Activated B cell treated with CpG ODN at 0.5 μM for 24 hours (primary cell): ENCODE measurements at regions of chr10 and their contacts with region 1.

Region 1: GRCh38 chr10:117375360-117376178 is at the start of gene PDZD8:
- DNase-seq: peak; percentile 96
- ATAC-seq: peak; percentile 89
- H3K4me3 Mint-ChIP-seq: peak within 1 kb of the TSS; percentile 93
- H3K27ac Mint-ChIP-seq: peak within 1 kb of the TSS; percentile 75
- H3K4me1 Mint-ChIP-seq: peaks cover 35% of the 10 kb centered on the region
- H3K27me3 Mint-ChIP-seq: peaks cover 17% of the 10 kb centered on the region
- CTCF ChIP-seq: no peak
- total RNA-seq, gene PDZD8: 13.2 and 13.7 TPM in 2 replicates

Region 2: GRCh38 chr10:117353684-117354083 is 21.9 kb before region 1 on chr10:
- CTCF ChIA-PET with region 1: no interaction called
- POLR2A ChIA-PET with region 1: no interaction called
- intact Hi-C with region 1: loop called (anchors 2 kb)
- DNase-seq: no peak
- ATAC-seq: no peak
- H3K4me3 Mint-ChIP-seq: no peak overlapping the region
- H3K27ac Mint-ChIP-seq: no peak overlapping the region
- H3K4me1 Mint-ChIP-seq: peaks cover 41% of the 10 kb centered on the region
- H3K27me3 Mint-ChIP-seq: no peaks in the 10 kb centered on the region
- CTCF ChIP-seq: no peak

Region 3: DNA sequence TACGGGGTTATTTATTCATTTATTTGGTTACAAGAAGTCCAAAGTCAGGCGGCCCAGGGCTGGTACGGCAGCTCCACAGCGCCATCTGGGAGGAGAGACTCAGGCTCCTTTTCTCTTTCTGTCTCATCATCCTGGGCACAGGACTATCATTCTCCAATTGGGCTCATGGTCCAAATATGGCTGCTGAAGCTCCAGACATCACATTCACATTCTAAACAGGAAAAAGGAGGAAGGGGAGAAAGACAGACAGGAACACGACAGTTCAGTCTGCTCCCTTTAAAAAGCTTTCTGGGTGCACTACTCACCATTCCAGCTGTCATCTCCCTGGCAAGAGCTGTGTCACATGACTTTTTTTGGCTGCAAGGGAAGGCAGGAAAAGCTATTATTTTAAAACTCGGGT is 74.1 kb after region 1 on chr10:
- CTCF ChIA-PET with region 1: no interaction called
- POLR2A ChIA-PET with region 1: no interaction called
- intact Hi-C with region 1: no loop called
- DNase-seq: no peak
- ATAC-seq: no peak
- H3K4me3 Mint-ChIP-seq: no peak overlapping the region
- H3K27ac Mint-ChIP-seq: no peak overlapping the region
- H3K4me1 Mint-ChIP-seq: no peaks in the 10 kb centered on the region
- H3K27me3 Mint-ChIP-seq: peaks cover 6% of the 10 kb centered on the region
- CTCF ChIP-seq: no peak

Region 4: DNA sequence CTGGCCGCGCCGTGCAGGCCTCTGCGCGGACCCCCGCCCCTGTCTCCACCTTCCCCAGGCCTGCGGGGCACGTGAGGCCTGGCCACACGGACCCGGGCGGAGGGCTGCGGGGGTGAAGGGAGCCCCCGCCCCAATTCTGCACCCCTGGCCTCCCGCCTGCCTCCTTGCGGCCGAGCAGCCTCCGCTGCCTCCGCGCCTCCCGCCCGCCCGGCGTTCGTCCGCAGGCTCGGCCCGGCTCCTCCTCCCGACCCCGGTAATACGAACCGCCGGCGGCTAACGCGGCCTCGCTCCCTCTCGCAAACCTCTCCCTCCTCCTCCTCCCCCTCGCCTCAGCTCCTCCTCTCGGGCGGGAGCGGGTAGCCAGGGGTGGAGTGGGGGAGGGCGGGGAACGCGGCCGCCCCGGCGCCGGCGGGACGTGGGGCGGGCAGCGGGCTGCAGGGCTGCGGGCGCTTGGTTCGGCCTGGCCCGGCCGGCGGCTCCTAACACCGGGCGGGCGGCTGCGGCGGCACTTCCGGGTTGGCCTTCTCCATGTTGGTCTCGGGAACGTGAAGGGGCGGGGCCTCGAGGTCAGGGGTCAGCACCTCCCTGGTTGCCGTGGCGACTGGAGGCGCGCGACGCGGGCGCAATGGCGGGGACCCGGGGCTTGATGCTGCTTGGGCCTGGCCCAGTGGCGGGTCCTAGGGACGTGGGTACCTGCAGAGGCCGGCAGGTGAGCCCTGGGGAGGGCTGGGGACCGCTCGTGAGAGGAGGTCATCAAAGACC is 671.0 kb after region 1 on chr10 and contains the start of gene RAB11FIP2:
- CTCF ChIA-PET with region 1: no interaction called
- POLR2A ChIA-PET with region 1: no interaction called
- intact Hi-C with region 1: loop called (anchors 2 kb)
- DNase-seq: peak; percentile 98
- ATAC-seq: peak; percentile 92
- H3K4me3 Mint-ChIP-seq: peak within 1 kb of the TSS; percentile 89
- H3K27ac Mint-ChIP-seq: peak within 1 kb of the TSS; percentile 66
- H3K4me1 Mint-ChIP-seq: peaks cover 38% of the 10 kb centered on the region
- H3K27me3 Mint-ChIP-seq: no peaks in the 10 kb centered on the region
- CTCF ChIP-seq: no peak
- total RNA-seq, gene RAB11FIP2: 20.4 and 33.2 TPM in 2 replicates